ENCODE measurements at regions of chr14 and their contacts with region 1.

Region 1: DNA sequence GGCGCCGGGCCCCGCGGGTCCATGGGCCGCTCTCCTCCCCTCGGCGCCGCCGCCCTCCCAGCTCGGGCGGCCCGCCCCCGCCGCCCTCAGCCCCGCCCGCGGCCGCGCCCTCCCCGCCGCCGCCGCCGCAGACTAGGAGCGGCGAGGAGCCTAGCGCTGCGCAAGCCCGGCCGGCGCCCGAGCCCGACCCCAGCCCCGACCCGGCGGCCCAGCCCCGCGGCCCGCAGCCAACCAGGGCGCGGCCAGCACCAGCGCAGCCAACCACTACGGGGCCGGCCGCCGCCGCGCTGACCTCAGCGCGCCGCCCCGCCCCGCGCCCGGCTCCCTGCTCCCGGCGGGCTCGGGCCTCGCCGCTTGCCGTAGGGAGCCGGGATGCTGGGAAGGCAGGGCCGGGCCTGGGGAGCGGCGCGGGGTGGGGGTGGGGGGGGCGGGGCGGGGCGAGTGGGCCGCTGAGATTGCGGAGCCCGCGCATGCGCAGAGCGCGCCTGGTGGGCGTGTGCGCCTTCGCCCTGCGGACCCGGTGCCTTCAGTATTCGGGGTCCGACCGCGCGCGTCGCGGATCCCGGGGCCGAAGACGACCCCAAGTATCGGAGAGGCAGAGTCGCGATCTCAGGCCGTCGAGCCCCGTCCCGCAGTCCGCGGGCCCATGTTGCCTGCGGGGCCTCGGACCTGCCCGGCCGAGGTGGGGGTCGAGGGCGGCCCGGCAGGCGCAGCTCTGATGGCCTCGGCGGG is at the start of gene CDC42BPB:
- DNase-seq: peak; percentile 90
- ATAC-seq: peak; percentile 95
- H3K4me3 ChIP-seq: peak within 1 kb of the TSS; percentile 100
- H3K27ac ChIP-seq: peak within 1 kb of the TSS; percentile 97
- H3K4me1 ChIP-seq: peaks cover 10% of the 10 kb centered on the region
- H3K27me3 ChIP-seq: no peaks in the 10 kb centered on the region
- CTCF ChIP-seq: no peak
- POLR2A ChIP-seq: no peak
- RAD21 ChIP-seq: no peak
- total RNA-seq, gene CDC42BPB: 48.0 and 49.1 TPM in 2 replicates

Region 2: GRCh38 chr14:102975662-102976061 is 81.9 kb before region 1 on chr14:
- CTCF ChIA-PET with region 1: interaction called, 4 read pairs
- POLR2A ChIA-PET with region 1: no interaction called
- dilution Hi-C with region 1: no loop called
- in situ Hi-C with region 1: no loop called
- intact Hi-C with region 1: loop called (anchors 5 kb)
- DNase-seq: no peak
- ATAC-seq: no peak
- H3K4me3 ChIP-seq: no peak overlapping the region
- H3K27ac ChIP-seq: no peak overlapping the region
- H3K4me1 ChIP-seq: no peaks in the 10 kb centered on the region
- H3K27me3 ChIP-seq: no peaks in the 10 kb centered on the region
- CTCF ChIP-seq: 0 out of 2 replicates have a peak, but pooled peaks have one; percentile 5
- POLR2A ChIP-seq: no peak
- RAD21 ChIP-seq: no peak

Region 3: GRCh38 chr14:103023881-103024473 is 33.6 kb before region 1 on chr14:
- CTCF ChIA-PET with region 1: no interaction called
- POLR2A ChIA-PET with region 1: no interaction called
- dilution Hi-C with region 1: no loop called
- in situ Hi-C with region 1: no loop called
- intact Hi-C with region 1: loop called (anchors 5 kb)
- DNase-seq: peak; percentile 91
- ATAC-seq: peak; percentile 87
- H3K4me3 ChIP-seq: peak overlapping the region; percentile 15; the same call in 1 of the 2 replicates
- H3K27ac ChIP-seq: peak overlapping the region; percentile 66
- H3K4me1 ChIP-seq: peaks cover 17% of the 10 kb centered on the region
- H3K27me3 ChIP-seq: no peaks in the 10 kb centered on the region
- CTCF ChIP-seq: no peak
- POLR2A ChIP-seq: peak; percentile 89
- RAD21 ChIP-seq: no peak; the same call in 1 of the 2 replicates

Region 4: DNA sequence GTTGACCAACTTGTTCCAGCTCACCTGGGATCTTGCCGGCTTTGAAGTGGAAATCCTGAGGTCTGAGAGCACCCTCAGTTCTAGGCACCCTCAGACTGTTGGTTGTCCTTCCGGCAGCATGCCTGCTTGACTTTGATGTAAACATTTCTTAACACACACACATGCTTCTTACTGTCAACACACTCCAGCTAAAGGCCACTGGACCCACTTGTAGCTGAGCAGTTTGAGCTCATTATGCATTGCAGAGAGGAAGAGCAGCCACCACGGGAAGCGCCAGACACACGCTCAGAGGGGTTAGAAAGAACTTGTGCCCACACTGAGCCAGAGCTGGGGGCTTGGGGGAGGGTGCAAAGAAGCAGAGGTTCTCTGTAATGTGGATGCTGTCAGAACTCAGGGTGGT is 121.6 kb after region 1 on chr14:
- CTCF ChIA-PET with region 1: no interaction called
- POLR2A ChIA-PET with region 1: no interaction called
- dilution Hi-C with region 1: no loop called
- in situ Hi-C with region 1: no loop called
- intact Hi-C with region 1: no loop called
- DNase-seq: no peak
- ATAC-seq: no peak
- H3K4me3 ChIP-seq: no peak overlapping the region
- H3K27ac ChIP-seq: no peak overlapping the region
- H3K4me1 ChIP-seq: no peaks in the 10 kb centered on the region
- H3K27me3 ChIP-seq: peaks cover 22% of the 10 kb centered on the region
- CTCF ChIP-seq: no peak
- POLR2A ChIP-seq: no peak
- RAD21 ChIP-seq: no peak

Measured in IMR-90 (cell line).